H1 (cell line): ENCODE measurements at regions of chr7 and their contacts with region 1.

Region 1: GRCh38 chr7:74026903-74027551 is 946 bp upstream of the ELN start:
- DNase-seq: peak; percentile 31 to 97
- H3K4me3 ChIP-seq: no peak overlapping the region
- H3K27ac ChIP-seq: no peak overlapping the region
- H3K4me1 ChIP-seq: peaks cover 0 to 24% (median 17%) of the 10 kb centered on the region in 4 experiments; a peak in 6 of 7 replicates
- H3K27me3 ChIP-seq: peaks cover 0 to 9% (median 4%) of the 10 kb centered on the region in 4 experiments; a peak in 3 of 7 replicates
- CTCF ChIP-seq: peak in 2 of 3 experiments; percentile 89 to 92; a peak in 3 of 4 replicates
- EP300 ChIP-seq: no peak
- POLR2A ChIP-seq: no peak
- RAD21 ChIP-seq: peak; percentile 72 to 84

Region 2: GRCh38 chr7:73732397-73732796 is 294.6 kb before region 1 on chr7:
- CTCF ChIA-PET with region 1: no interaction called
- POLR2A ChIA-PET with region 1: no interaction called
- DNase-seq: no peak
- H3K4me3 ChIP-seq: no peak overlapping the region
- H3K27ac ChIP-seq: no peak overlapping the region
- H3K4me1 ChIP-seq: peaks cover 0 to 6% (median 0%) of the 10 kb centered on the region in 4 experiments; a peak in 4 of 7 replicates
- H3K27me3 ChIP-seq: no peaks in the 10 kb centered on the region
- CTCF ChIP-seq: no peak
- EP300 ChIP-seq: no peak
- POLR2A ChIP-seq: no peak
- RAD21 ChIP-seq: no peak

Region 3: GRCh38 chr7:73865738-73866445 is 161.1 kb before region 1 on chr7:
- CTCF ChIA-PET with region 1: interaction called, 43 read pairs
- POLR2A ChIA-PET with region 1: interaction called, 6 read pairs
- DNase-seq: peak in 1 of 2 experiments; percentile 58
- H3K4me3 ChIP-seq: no peak overlapping the region
- H3K27ac ChIP-seq: no peak overlapping the region
- H3K4me1 ChIP-seq: peaks cover 3 to 15% (median 12%) of the 10 kb centered on the region in 4 experiments
- H3K27me3 ChIP-seq: no peaks in the 10 kb centered on the region
- CTCF ChIP-seq: peak; percentile 58 to 82 (median 68)
- EP300 ChIP-seq: no peak
- POLR2A ChIP-seq: no peak
- RAD21 ChIP-seq: peak; percentile 94 to 95

Region 4: GRCh38 chr7:73885975-73886798 is 140.8 kb before region 1 on chr7:
- CTCF ChIA-PET with region 1: interaction called, 16 read pairs
- POLR2A ChIA-PET with region 1: no interaction called
- DNase-seq: no peak
- H3K4me3 ChIP-seq: no peak overlapping the region
- H3K27ac ChIP-seq: no peak overlapping the region
- H3K4me1 ChIP-seq: peaks cover 0 to 1% (median 0%) of the 10 kb centered on the region in 4 experiments; a peak in 3 of 7 replicates
- H3K27me3 ChIP-seq: no peaks in the 10 kb centered on the region
- CTCF ChIP-seq: no peak
- EP300 ChIP-seq: no peak
- POLR2A ChIP-seq: no peak
- RAD21 ChIP-seq: no peak

Region 5: DNA sequence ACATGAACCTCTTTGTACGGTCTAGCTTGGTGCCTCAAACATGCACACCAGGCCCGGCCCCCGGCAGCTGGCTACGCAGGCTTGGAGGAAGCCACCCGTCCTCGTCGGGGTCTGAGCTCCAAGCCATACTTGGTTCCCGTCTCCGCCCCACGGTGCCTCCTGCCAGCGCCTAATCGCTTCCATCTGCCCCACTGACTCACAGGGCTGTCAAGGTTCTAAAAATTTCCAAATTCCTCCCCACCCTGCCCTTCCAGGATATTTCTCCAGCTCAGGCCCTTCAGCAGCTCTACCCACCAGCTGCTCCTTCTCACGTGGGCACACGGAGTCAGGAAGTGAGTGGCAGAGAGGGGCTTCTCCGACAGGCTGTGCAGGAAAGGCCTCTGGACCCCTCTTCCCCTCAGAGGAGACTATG is 127.3 kb before region 1 on chr7:
- CTCF ChIA-PET with region 1: interaction called, 19 read pairs
- POLR2A ChIA-PET with region 1: no interaction called
- DNase-seq: no peak
- H3K4me3 ChIP-seq: no peak overlapping the region
- H3K27ac ChIP-seq: no peak overlapping the region
- H3K4me1 ChIP-seq: peaks cover 4 to 18% (median 7%) of the 10 kb centered on the region in 4 experiments
- H3K27me3 ChIP-seq: no peaks in the 10 kb centered on the region
- CTCF ChIP-seq: no peak
- EP300 ChIP-seq: no peak
- POLR2A ChIP-seq: no peak
- RAD21 ChIP-seq: no peak

Region 6: GRCh38 chr7:73912223-73912622 is 114.8 kb before region 1 on chr7:
- CTCF ChIA-PET with region 1: no interaction called
- POLR2A ChIA-PET with region 1: no interaction called
- DNase-seq: no peak
- H3K4me3 ChIP-seq: no peak overlapping the region
- H3K27ac ChIP-seq: no peak overlapping the region
- H3K4me1 ChIP-seq: peaks cover 0 to 10% (median 0%) of the 10 kb centered on the region in 4 experiments; a peak in 1 of 7 replicates
- H3K27me3 ChIP-seq: no peaks in the 10 kb centered on the region
- CTCF ChIP-seq: no peak
- EP300 ChIP-seq: no peak
- POLR2A ChIP-seq: no peak
- RAD21 ChIP-seq: no peak

Region 7: DNA sequence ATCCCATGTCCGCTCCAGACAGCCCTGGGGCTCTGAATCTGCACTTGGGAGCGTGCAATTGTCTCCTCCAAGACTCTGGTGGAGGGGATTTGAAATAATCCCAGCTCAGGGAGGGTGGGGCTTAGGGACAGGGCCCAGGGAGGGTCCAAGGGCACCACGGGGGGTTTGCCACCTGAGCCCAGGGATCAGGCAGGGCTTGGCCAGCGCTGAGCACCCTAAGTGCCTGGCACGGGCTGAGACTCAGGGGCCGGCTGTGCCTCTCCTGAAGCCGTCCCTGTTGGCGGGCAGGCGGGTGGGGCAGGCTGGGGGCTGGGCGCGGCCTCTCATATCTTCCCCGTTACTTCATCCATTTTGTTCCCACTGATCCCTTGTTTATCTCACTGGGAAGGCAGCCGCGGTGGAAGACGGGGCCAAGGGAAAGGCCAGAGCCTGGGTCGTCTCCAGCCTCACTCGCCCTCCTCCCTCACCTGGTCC is 40.8 kb before region 1 on chr7:
- CTCF ChIA-PET with region 1: interaction called, 32 read pairs
- POLR2A ChIA-PET with region 1: no interaction called
- DNase-seq: no peak
- H3K4me3 ChIP-seq: no peak overlapping the region
- H3K27ac ChIP-seq: no peak overlapping the region
- H3K4me1 ChIP-seq: no peaks in the 10 kb centered on the region; a peak in 1 of 7 replicates
- H3K27me3 ChIP-seq: no peaks in the 10 kb centered on the region
- CTCF ChIP-seq: no peak
- EP300 ChIP-seq: no peak
- POLR2A ChIP-seq: no peak
- RAD21 ChIP-seq: no peak

Region 8: DNA sequence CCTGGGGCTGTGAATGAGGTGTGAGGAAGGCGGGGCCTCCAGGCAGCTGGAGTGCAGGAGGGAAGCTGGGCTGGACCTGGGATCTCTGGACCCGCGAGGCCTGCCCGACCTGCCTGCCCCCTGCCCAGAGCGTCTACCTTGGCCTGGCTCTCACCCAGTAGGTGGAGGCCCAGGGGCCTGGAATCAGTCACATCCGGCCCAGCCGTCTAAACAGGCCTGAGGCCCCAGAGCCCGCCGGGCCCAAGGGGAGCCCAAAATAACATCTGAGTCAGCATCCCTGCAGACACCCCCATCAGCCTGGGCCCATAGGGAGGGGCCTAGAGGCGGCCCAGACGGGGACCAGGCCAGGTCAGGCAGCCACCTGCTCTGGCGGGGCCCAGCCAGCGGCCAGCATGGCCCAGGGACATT is 14.2 kb before region 1 on chr7:
- CTCF ChIA-PET with region 1: interaction called, 145 read pairs
- POLR2A ChIA-PET with region 1: interaction called, 6 read pairs
- DNase-seq: no peak
- H3K4me3 ChIP-seq: no peak overlapping the region
- H3K27ac ChIP-seq: no peak overlapping the region
- H3K4me1 ChIP-seq: no peaks in the 10 kb centered on the region
- H3K27me3 ChIP-seq: no peaks in the 10 kb centered on the region
- CTCF ChIP-seq: no peak
- EP300 ChIP-seq: no peak
- POLR2A ChIP-seq: no peak
- RAD21 ChIP-seq: no peak

Region 9: GRCh38 chr7:74051629-74052410 is 24.8 kb after region 1 on chr7:
- CTCF ChIA-PET with region 1: interaction called, 15 read pairs
- POLR2A ChIA-PET with region 1: no interaction called
- DNase-seq: peak in 1 of 2 experiments; percentile 81
- H3K4me3 ChIP-seq: no peak overlapping the region
- H3K27ac ChIP-seq: no peak overlapping the region
- H3K4me1 ChIP-seq: peaks cover 0 to 8% (median 3%) of the 10 kb centered on the region in 4 experiments; a peak in 3 of 7 replicates
- H3K27me3 ChIP-seq: no peaks in the 10 kb centered on the region
- CTCF ChIP-seq: peak; percentile 49 to 71 (median 61)
- EP300 ChIP-seq: no peak
- POLR2A ChIP-seq: no peak
- RAD21 ChIP-seq: peak; percentile 56 to 72; a peak in 3 of 4 replicates